ENCODE measurements at regions of chr3 and their contacts with region 1.

Region 1: GRCh38 chr3:56988458-56989168 is 71.9 kb upstream of the SPATA12 start:
- DNase-seq: peak; percentile 83
- ATAC-seq: peak; percentile 67
- H3K4me3 Mint-ChIP-seq: no peak overlapping the region
- H3K27ac Mint-ChIP-seq: no peak overlapping the region
- H3K4me1 Mint-ChIP-seq: peaks cover 35% of the 10 kb centered on the region
- H3K27me3 Mint-ChIP-seq: peaks cover 20% of the 10 kb centered on the region

Region 2: GRCh38 chr3:56693750-56694149 is 294.9 kb before region 1 on chr3:
- CTCF ChIA-PET with region 1: interaction called, 35 read pairs
- POLR2A ChIA-PET with region 1: no interaction called
- DNase-seq: no peak
- ATAC-seq: peak; percentile 23
- H3K4me3 Mint-ChIP-seq: peak overlapping the region; percentile 80
- H3K27ac Mint-ChIP-seq: peak overlapping the region; percentile 94
- H3K4me1 Mint-ChIP-seq: peaks cover 47% of the 10 kb centered on the region
- H3K27me3 Mint-ChIP-seq: no peaks in the 10 kb centered on the region

Region 3: DNA sequence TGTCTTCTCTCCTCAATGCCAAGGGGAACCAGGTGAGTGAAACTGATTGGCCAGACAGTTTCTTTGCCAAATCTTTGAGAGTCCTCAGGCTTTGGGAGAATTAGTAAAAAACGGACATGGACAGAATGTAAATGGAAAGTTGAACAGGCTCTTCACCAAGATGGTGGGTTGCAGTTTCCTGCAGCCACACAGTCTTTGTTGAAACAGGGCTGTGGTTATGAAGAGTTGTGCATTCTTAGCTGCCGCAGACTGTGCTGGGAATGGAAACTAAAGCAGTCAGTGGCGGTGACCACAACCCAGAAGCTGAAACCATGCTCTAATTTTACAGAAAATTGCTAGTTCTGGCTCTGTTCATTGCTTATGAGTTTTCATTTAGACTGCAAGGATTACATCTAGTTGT is 263.4 kb before region 1 on chr3:
- CTCF ChIA-PET with region 1: interaction called, 25 read pairs
- POLR2A ChIA-PET with region 1: no interaction called
- DNase-seq: peak; percentile 89
- ATAC-seq: peak; percentile 93
- H3K4me3 Mint-ChIP-seq: peak overlapping the region; percentile 71
- H3K27ac Mint-ChIP-seq: peak overlapping the region; percentile 96
- H3K4me1 Mint-ChIP-seq: peaks cover 69% of the 10 kb centered on the region
- H3K27me3 Mint-ChIP-seq: no peaks in the 10 kb centered on the region

Region 4: GRCh38 chr3:56783644-56784447 is 204.8 kb before region 1 on chr3:
- CTCF ChIA-PET with region 1: interaction called, 23 read pairs
- POLR2A ChIA-PET with region 1: no interaction called
- DNase-seq: peak; percentile 90
- ATAC-seq: peak; percentile 84
- H3K4me3 Mint-ChIP-seq: peak overlapping the region; percentile 74
- H3K27ac Mint-ChIP-seq: peak overlapping the region; percentile 91
- H3K4me1 Mint-ChIP-seq: peaks cover 98% of the 10 kb centered on the region
- H3K27me3 Mint-ChIP-seq: no peaks in the 10 kb centered on the region

Region 5: GRCh38 chr3:56819016-56819809 is 169.4 kb before region 1 on chr3:
- CTCF ChIA-PET with region 1: interaction called, 27 read pairs
- POLR2A ChIA-PET with region 1: no interaction called
- DNase-seq: no peak
- ATAC-seq: no peak
- H3K4me3 Mint-ChIP-seq: no peak overlapping the region
- H3K27ac Mint-ChIP-seq: no peak overlapping the region
- H3K4me1 Mint-ChIP-seq: peaks cover 39% of the 10 kb centered on the region
- H3K27me3 Mint-ChIP-seq: no peaks in the 10 kb centered on the region

Region 6: DNA sequence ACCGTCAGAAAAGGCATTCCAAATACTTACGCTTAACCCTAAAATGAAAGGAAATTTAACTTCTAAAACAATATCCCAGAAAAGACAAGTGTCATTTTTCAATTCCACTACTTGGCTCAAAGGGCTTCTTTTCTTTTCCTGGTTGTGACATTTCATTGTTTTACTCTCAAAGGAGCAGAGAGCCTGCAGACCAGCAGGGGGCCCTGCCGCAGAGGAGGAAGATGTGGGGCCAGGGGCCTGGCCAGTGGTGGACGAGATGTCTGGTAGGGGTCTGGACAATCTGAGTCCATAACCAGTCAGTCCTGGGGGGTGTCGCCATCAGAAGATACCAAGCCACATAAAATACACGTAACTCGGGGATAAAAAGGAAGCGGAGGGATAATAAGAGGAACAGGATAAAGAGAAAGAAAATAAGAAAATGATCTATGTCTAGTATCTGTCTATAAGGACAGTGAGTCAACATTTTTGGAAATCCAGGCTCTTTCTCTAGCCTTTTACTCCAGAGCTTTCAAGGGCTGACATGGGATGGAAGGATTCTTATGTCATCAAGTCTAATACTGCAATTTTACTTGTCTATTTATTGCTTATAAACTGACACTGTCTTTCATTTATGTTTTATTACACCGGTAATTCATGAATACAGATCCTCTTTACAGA is 132.6 kb before region 1 on chr3:
- CTCF ChIA-PET with region 1: interaction called, 43 read pairs
- POLR2A ChIA-PET with region 1: no interaction called
- DNase-seq: peak; percentile 36
- ATAC-seq: no peak
- H3K4me3 Mint-ChIP-seq: no peak overlapping the region
- H3K27ac Mint-ChIP-seq: no peak overlapping the region
- H3K4me1 Mint-ChIP-seq: peaks cover 34% of the 10 kb centered on the region
- H3K27me3 Mint-ChIP-seq: no peaks in the 10 kb centered on the region

Region 7: DNA sequence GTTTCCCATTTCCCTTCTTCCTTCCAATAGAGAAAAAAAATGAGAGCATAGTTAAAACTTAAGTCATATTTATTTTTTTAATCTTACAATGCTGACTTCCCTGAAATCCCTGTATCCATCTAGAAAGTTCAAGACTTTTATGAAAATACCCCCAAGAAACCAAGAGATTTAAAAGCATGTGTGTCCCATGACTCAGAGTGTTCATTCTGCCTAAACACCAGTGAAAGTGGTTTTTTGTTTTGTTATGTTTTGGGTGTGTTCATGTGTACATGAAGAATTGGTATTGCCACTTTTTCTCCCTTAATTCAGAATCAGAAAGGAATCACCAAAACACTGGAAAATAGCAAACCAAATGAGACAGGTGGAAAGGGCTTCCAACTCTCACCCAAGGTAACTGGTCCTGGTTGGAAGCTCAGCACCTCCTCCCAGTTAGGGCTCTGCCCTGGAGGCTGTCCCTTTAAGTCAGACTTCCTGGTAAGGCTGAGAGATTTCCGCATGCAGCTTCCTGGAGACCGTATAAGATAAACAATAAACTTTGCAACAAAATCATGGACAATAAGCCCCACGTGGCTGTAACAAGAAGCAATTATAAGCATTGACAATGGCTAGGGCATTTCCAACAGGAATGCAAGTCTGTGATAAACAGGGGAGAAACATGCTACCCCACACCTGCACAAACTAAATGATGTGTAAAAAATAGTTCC is 64.9 kb before region 1 on chr3:
- CTCF ChIA-PET with region 1: interaction called, 57 read pairs
- POLR2A ChIA-PET with region 1: no interaction called
- DNase-seq: peak; percentile 65
- ATAC-seq: peak; percentile 73
- H3K4me3 Mint-ChIP-seq: peak overlapping the region; percentile 41
- H3K27ac Mint-ChIP-seq: peak overlapping the region; percentile 79
- H3K4me1 Mint-ChIP-seq: peaks cover 86% of the 10 kb centered on the region
- H3K27me3 Mint-ChIP-seq: no peaks in the 10 kb centered on the region

Region 8: DNA sequence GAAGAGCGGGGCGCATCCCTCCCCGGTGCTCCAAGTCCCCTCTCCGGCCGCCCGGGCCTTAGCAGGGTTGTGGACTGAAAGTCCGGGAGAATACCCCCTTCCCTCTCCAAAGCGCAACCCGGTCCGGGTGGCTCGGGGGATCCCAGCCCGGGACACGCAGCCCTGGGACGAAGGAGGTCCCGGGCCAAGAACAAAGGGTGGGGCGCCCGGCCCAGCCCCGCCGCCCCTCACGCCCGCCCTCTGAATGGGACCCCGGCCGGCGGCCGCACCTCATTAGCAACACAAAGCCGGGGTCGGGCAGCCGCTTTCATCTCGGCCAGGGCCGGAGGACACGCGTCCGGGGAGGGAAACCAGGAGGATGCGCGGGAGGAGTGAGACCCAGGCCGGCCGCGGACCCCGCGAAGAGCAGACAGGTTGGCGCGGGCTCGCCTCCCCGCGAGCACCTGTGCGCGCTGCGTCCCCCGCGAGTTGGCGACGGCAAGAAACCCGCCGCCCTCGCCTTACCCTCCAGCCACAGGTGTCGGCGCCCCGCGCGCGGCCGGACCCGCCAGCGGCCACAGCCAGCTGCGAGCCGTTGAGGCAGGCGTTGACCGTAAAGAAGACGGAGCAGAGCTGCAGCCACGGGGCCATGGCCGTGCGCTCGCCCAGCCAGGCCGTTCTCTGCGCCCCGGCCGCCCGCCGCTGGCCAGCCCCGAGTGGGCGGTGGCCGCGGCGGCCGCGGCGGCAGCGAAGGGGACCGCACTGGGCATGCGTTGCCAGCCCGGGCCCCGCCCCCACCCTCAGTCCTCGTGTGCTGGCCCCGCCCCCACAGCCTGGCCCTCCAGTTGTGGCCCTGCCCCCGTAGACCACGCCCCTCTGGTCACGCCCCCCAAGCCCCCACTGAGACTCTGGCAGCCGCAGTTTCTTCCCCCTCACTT is 176.3 kb after region 1 on chr3 and contains the start of gene IL17RD:
- CTCF ChIA-PET with region 1: no interaction called
- POLR2A ChIA-PET with region 1: no interaction called
- DNase-seq: peak; percentile 66
- ATAC-seq: peak; percentile 58
- H3K4me3 Mint-ChIP-seq: peak within 1 kb of the TSS; percentile 63
- H3K27ac Mint-ChIP-seq: no peak within 1 kb of the TSS
- H3K4me1 Mint-ChIP-seq: peaks cover 9% of the 10 kb centered on the region
- H3K27me3 Mint-ChIP-seq: peaks cover 72% of the 10 kb centered on the region
- total RNA-seq, gene IL17RD: not detected

Region 9: DNA sequence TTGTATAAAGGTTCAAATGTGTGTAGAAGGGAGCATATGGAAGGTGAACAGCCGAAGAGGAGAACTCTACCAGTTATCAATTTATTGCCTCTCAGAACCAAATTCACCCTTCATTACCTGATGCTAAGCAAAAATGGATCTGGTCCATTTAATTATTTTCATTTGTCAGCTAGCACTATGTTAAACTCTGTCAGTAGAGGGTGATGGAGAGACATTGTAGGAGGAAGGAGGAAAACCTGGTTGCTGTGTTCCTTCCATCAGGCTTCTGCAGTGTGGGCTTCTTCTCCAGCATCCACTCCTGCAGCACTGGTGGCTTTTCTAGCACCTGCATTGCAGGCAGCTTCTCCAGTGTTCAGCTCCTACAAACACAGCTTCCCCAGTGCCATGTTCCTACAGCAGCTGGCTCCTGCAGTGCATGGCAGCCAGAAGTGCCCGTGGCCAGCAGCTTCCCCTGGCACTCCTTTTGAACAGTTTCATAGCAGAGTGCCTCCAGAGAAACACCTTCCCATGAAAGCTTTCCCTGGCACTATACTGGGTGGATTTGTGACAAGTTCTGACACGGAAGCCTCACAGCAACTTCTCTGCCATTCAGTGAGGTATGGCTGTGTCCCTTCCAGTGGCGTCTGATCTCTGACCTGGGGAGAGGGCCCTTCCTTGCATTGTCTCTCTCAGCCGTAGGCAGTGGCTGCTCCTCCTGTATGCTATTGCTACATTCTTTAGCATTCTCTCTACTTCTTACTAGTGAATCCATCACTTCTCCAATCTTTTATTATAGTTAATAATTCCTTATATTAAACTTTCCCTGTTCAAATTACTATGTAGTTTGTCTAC is 191.2 kb after region 1 on chr3:
- CTCF ChIA-PET with region 1: no interaction called
- POLR2A ChIA-PET with region 1: no interaction called
- DNase-seq: no peak
- ATAC-seq: no peak
- H3K4me3 Mint-ChIP-seq: no peak overlapping the region
- H3K27ac Mint-ChIP-seq: no peak overlapping the region
- H3K4me1 Mint-ChIP-seq: no peaks in the 10 kb centered on the region
- H3K27me3 Mint-ChIP-seq: peaks cover 14% of the 10 kb centered on the region